A549 (cell line): ENCODE measurements at regions of chr2 and their contacts with region 1.

Region 1: GRCh38 chr2:237572021-237572741 is 5.8 kb downstream of the PRLH start:
- DNase-seq: peak; percentile 92 to 95
- ATAC-seq: peak; percentile 89 to 99
- H3K4me3 ChIP-seq: no peak overlapping the region
- H3K27ac ChIP-seq: peak overlapping the region; percentile 55 to 71; a peak in 5 of 6 replicates
- H3K4me1 ChIP-seq: peaks cover 10% of the 10 kb centered on the region; the same call in 2 of the 3 replicates
- CTCF ChIP-seq: peak; percentile 98
- EP300 ChIP-seq: no peak
- POLR2A ChIP-seq: no peak
- RAD21 ChIP-seq: peak; percentile 99 to 100

Region 2: DNA sequence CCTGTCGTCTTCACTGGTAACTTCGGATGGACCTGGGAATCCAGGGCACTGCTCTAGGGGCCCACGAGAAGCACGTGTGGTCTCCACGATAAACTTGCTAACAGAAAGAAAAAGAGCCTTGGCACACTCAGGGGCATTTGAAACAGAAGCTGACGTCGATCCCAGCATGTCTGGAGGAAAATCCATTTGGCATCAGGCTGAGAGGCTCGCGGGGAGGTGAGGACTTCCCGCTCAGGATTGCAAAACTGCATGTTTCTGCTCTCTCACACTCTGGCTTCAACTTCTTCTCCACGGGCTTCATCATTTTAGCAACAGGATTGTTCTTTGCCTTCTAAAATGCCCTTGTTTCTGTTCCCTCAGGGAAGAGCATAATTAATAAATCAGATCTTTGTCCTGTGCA is 668.2 kb before region 1 on chr2:
- CTCF ChIA-PET with region 1: no interaction called
- POLR2A ChIA-PET with region 1: no interaction called
- DNase-seq: no peak
- ATAC-seq: no peak
- H3K4me3 ChIP-seq: no peak overlapping the region
- H3K27ac ChIP-seq: no peak overlapping the region
- H3K4me1 ChIP-seq: no peaks in the 10 kb centered on the region
- CTCF ChIP-seq: no peak
- EP300 ChIP-seq: no peak
- POLR2A ChIP-seq: no peak
- RAD21 ChIP-seq: no peak

Region 3: GRCh38 chr2:237092920-237093781 is 479.0 kb before region 1 on chr2:
- CTCF ChIA-PET with region 1: interaction called, 42 read pairs
- POLR2A ChIA-PET with region 1: interaction called, 4 read pairs
- DNase-seq: peak; percentile 35 to 54
- ATAC-seq: peak; percentile 82 to 83
- H3K4me3 ChIP-seq: no peak overlapping the region
- H3K27ac ChIP-seq: peak overlapping the region in 1 of 2 experiments; percentile 22; a peak in 1 of 6 replicates
- H3K4me1 ChIP-seq: peaks cover 29% of the 10 kb centered on the region
- CTCF ChIP-seq: peak; percentile 77
- EP300 ChIP-seq: no peak
- POLR2A ChIP-seq: no peak
- RAD21 ChIP-seq: peak; percentile 74 to 80

Region 4: GRCh38 chr2:237165405-237166276 is 406.5 kb before region 1 on chr2:
- CTCF ChIA-PET with region 1: interaction called, 12 read pairs
- POLR2A ChIA-PET with region 1: no interaction called
- DNase-seq: peak in 1 of 2 experiments; percentile 35
- ATAC-seq: peak; percentile 68 to 80; a peak in 5 of 6 replicates
- H3K4me3 ChIP-seq: no peak overlapping the region
- H3K27ac ChIP-seq: no peak overlapping the region; a peak in 1 of 6 replicates
- H3K4me1 ChIP-seq: no peaks in the 10 kb centered on the region
- CTCF ChIP-seq: peak; percentile 52
- EP300 ChIP-seq: no peak
- POLR2A ChIP-seq: no peak
- RAD21 ChIP-seq: peak; percentile 38 to 63; a peak in 4 of 5 replicates

Region 5: DNA sequence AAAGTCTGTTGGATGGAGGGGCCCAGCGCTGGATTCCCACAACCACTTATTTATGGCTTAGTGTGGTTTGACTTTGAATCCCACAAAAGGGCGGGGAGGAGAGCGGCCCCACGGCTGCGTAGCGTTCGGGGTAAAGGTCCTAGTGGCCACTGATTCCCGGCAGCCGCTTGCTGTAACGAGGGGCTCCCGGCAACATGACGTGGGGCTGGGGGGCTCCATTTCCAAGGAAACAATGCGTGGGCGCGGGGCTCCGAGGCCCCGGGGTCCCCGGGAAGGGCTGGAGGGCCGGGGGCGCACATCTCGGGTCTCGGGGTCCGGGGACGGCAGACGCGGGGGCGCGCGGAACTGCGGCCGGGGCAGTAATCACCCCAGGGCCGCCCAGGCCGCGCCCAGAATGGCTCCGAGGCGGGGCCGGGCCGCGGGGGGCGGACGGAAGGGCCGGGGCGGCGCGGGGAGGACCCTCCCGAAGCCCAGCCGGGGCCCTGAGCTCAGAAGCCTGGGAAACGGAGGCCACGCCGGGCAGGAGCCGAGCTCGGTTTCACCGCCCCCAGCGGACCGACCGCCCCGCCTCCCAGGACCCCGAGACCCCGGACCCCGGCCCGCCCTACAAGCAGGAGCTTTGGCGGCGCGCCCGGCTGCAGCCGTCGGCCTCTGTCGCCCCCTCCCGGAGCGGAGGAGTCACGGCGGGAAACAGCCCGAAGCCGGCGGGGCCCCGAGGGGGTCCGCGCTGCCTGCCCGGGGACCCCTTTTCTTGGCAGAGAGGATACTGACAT is 97.1 kb before region 1 on chr2:
- CTCF ChIA-PET with region 1: interaction called, 84 read pairs
- POLR2A ChIA-PET with region 1: no interaction called
- DNase-seq: peak; percentile 71 to 85
- ATAC-seq: peak; percentile 80 to 89
- H3K4me3 ChIP-seq: peak overlapping the region; percentile 57
- H3K27ac ChIP-seq: peak overlapping the region; percentile 95 to 100
- H3K4me1 ChIP-seq: peaks cover 36% of the 10 kb centered on the region
- CTCF ChIP-seq: peak; percentile 85
- EP300 ChIP-seq: peak in 1 of 2 experiments; percentile 32; a peak in 1 of 5 replicates
- POLR2A ChIP-seq: peak; percentile 35; the same call in 1 of the 2 replicates
- RAD21 ChIP-seq: peak; percentile 43 to 66

Region 6: DNA sequence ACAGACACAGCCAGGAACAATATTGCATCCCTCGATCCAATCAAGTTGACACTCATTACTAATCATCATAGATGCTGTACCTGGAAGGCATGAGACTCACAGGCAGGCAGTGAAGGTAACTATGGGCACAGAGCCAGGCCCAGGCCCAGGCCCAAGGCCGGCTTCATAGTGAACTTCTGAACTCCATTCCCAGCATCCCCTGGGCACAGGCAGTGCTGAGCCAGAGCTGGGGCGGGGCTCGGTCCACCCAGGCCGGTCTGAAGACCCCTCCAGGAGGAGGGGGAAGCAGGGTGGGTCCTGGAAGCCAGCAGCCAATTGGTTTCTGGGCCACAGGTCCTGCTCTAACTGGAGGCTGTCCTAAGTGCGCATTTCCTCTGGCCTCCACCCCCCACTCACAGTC is 47.5 kb before region 1 on chr2:
- CTCF ChIA-PET with region 1: interaction called, 10 read pairs
- POLR2A ChIA-PET with region 1: no interaction called
- DNase-seq: no peak
- ATAC-seq: peak in 1 of 2 experiments; percentile 11; a peak in 3 of 6 replicates
- H3K4me3 ChIP-seq: no peak overlapping the region
- H3K27ac ChIP-seq: peak overlapping the region in 1 of 2 experiments; percentile 56; a peak in 1 of 6 replicates
- H3K4me1 ChIP-seq: no peaks in the 10 kb centered on the region
- CTCF ChIP-seq: no peak
- EP300 ChIP-seq: no peak
- POLR2A ChIP-seq: no peak
- RAD21 ChIP-seq: no peak

Region 7: GRCh38 chr2:237558906-237559641 is 13.1 kb before region 1 on chr2:
- CTCF ChIA-PET with region 1: interaction called, 45 read pairs
- POLR2A ChIA-PET with region 1: no interaction called
- DNase-seq: peak in 1 of 2 experiments; percentile 43
- ATAC-seq: peak; percentile 5 to 9; a peak in 4 of 6 replicates
- H3K4me3 ChIP-seq: no peak overlapping the region
- H3K27ac ChIP-seq: peak overlapping the region in 1 of 2 experiments; percentile 40; a peak in 1 of 6 replicates
- H3K4me1 ChIP-seq: peaks cover 11% of the 10 kb centered on the region; the same call in 1 of the 3 replicates
- CTCF ChIP-seq: no peak
- EP300 ChIP-seq: no peak
- POLR2A ChIP-seq: no peak
- RAD21 ChIP-seq: no peak

Region 8: DNA sequence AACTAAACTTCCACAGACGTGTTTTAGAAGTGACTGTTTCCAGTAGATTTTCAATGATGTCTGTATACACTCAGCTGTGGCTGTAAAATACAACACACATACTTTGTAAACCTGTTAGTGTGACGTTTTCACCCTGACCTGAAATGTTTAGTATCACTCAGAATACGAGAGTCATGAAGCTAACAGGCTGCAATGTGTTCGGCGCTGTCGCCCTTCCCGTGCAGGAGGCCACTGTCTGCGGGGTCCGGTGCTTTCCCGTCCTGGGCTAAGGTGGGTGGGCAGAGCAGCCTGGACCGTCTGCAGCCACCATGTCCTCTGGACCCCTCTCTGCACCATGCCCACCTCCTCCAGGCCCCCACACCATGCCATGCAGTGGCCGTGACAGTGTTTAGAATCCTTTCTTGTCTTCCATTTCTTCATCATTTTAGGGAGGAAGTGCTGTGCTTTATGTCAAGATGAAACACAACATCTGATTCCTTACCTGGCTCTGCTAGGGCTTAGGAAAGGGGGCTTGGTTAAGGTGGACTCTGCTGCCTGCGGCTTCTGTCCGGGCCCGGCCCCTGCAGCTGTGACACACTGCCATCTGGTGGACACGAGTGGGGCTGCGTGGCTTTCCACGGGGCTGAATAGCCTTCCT is 172.6 kb after region 1 on chr2:
- CTCF ChIA-PET with region 1: interaction called, 12 read pairs
- POLR2A ChIA-PET with region 1: no interaction called
- DNase-seq: peak; percentile 67 to 76
- ATAC-seq: peak; percentile 85 to 92
- H3K4me3 ChIP-seq: no peak overlapping the region
- H3K27ac ChIP-seq: no peak overlapping the region
- H3K4me1 ChIP-seq: peaks cover 23% of the 10 kb centered on the region
- CTCF ChIP-seq: peak; percentile 96
- EP300 ChIP-seq: no peak
- POLR2A ChIP-seq: no peak
- RAD21 ChIP-seq: peak; percentile 97 to 98